Common myeloid progenitor, CD34-positive (primary cell): ENCODE measurements at regions of chr5 and their contacts with region 1.

Region 1: DNA sequence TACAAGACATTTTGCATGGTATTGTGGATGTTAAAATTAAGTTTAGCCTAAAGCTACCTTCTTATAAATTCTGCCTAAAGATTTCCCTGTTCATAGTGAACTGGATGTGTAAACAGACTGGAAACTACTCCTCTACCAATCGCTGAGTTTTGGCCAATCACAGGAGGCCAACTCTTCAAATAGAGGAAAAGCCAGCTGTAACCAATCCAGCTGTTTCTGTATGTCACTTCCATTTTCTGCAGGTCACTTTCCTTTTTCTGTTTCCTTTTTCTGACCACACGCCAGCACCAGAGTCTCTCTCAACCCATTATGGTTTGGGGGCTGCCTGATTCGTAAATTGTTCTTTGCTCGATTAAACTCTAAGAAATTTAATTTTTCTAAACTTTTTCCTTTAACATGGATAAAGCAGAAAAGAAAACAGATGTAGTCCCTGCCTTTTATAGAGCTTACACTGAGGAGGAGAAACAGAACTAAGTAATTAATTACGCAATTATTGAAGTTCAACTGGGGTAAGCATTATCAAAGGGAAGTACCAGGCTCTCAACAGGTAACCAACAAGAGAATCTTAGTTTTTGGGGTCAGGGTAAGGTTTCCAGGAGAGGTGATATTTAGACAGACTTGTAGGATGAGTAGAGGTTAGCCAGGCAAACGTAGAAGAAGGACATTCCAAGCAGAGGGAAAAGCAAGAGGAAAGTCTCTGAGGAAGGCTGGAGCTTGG is 27.7 kb downstream of the RANBP3L start:
- DNase-seq: peak in 2 of 3 donors; percentile 19 to 26
- H3K4me3 ChIP-seq: no peak overlapping the region
- H3K27ac ChIP-seq: no peak overlapping the region
- H3K4me1 ChIP-seq: peaks cover 0 to 10% (median under 1%) of the 10 kb centered on the region in 4 experiments
- H3K27me3 ChIP-seq: no peaks in the 10 kb centered on the region

Region 2: DNA sequence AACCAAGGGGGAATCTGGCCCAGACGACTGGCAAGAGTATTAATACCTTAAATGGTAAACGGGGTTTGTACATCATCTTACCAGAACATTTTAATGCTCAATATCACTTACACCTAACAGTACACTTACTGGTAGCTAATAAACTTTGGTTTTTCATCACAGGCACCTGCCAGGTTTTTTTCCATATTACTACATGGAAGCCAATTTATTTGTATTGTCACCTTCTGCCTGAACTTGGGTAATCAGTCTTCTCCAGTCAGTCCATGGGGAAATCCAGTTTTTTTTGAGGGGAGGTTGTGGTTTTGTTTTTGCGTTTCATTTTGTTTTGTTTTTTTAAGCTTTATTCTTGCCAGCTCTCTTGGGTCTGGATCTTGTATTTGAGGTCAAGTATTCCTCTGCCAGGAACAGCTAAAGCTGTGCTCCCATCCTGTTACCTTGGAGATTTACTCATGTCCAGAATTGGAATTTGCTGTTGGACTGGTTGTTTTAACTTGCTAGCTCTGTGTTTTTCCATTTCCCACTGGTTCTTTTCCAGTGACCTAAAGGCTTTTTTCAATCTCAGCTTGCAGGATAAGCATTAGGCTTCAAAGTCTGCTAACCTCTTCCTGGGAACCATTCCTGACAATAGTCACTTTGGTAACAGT is 21.1 kb before region 1 on chr5:
- CTCF ChIA-PET with region 1: no interaction called
- POLR2A ChIA-PET with region 1: no interaction called
- DNase-seq: no peak
- H3K4me3 ChIP-seq: no peak overlapping the region
- H3K27ac ChIP-seq: no peak overlapping the region
- H3K4me1 ChIP-seq: no peaks in the 10 kb centered on the region
- H3K27me3 ChIP-seq: no peaks in the 10 kb centered on the region

Region 3: GRCh38 chr5:36397901-36398536 is 124.1 kb after region 1 on chr5:
- CTCF ChIA-PET with region 1: interaction called, 13 read pairs
- POLR2A ChIA-PET with region 1: no interaction called
- DNase-seq: peak; percentile 54 to 63 (median 62)
- H3K4me3 ChIP-seq: no peak overlapping the region
- H3K27ac ChIP-seq: no peak overlapping the region
- H3K4me1 ChIP-seq: peaks cover 0 to 26% (median 6%) of the 10 kb centered on the region in 4 experiments
- H3K27me3 ChIP-seq: no peaks in the 10 kb centered on the region